ENCODE measurements at regions of chr2 and their contacts with region 1.

Region 1: GRCh38 chr2:159925975-159926374 is 128.0 kb upstream of the CD302 start:
- DNase-seq: no peak
- H3K4me3 ChIP-seq: no peak overlapping the region
- H3K27me3 ChIP-seq: peaks cover 2% of the 10 kb centered on the region; the same call in 1 of the 2 replicates
- CTCF ChIP-seq: no peak

Region 2: GRCh38 chr2:159124441-159124911 is 801.5 kb before region 1 on chr2:
- CTCF ChIA-PET with region 1: no interaction called
- POLR2A ChIA-PET with region 1: interaction called, 15 read pairs
- DNase-seq: peak; percentile 70
- H3K4me3 ChIP-seq: no peak overlapping the region
- H3K27me3 ChIP-seq: no peaks in the 10 kb centered on the region
- CTCF ChIP-seq: no peak

Region 3: DNA sequence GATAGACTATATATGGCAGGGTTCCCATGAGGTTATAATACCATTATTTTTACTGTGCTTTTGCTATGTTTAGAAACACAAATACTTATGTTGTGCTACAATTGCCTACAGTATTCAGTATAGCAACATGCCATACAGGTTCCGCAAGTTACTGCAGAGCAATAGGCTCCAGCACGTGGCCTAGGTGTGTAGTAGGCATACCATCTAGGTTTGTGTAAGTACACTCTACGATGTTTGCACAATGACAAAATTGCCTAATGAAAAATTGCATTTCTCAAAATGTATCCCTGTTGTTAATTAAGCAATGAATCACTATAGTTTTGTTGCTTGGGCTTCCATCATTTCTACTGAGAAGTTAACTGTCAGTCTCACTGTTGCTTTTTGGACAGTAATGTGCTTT is 137.7 kb before region 1 on chr2:
- CTCF ChIA-PET with region 1: no interaction called
- POLR2A ChIA-PET with region 1: no interaction called
- DNase-seq: no peak
- H3K4me3 ChIP-seq: no peak overlapping the region
- H3K27me3 ChIP-seq: no peaks in the 10 kb centered on the region
- CTCF ChIP-seq: no peak